ENCODE measurements at regions of chr5 and their contacts with region 1.

Region 1: GRCh38 chr5:149317281-149318048 is 27.8 kb upstream of the GRPEL2 start:
- DNase-seq: no peak
- ATAC-seq: peak; percentile 86
- H3K4me3 ChIP-seq: no peak overlapping the region
- H3K27ac ChIP-seq: no peak overlapping the region
- H3K4me1 ChIP-seq: no peaks in the 10 kb centered on the region
- H3K27me3 ChIP-seq: no peaks in the 10 kb centered on the region; a peak in 1 of 4 replicates
- CTCF ChIP-seq: peak; percentile 67 to 82 (median 72)
- EP300 ChIP-seq: no peak
- POLR2A ChIP-seq: no peak
- RAD21 ChIP-seq: peak; percentile 79

Region 2: DNA sequence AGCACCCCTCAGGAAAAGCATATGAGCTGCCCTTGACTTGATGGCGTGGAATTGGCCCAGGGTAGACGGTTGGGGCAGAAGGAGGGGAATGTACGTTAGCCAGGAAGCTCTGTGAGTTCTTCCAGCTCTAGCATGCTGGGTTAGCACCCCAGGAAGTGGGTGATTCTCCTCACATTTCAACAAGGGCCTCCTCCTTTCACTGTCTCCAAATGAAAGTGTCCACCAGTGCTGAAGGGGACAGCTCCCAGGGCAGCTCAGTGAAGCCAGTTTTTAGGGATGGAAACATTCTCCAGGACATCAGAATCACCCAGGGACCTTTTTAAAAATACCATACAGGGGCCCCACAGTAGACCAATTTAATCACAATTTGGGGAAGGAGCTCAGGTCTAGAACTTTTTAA is 63.0 kb before region 1 on chr5:
- CTCF ChIA-PET with region 1: no interaction called
- POLR2A ChIA-PET with region 1: no interaction called
- RAD21 ChIA-PET with region 1: no interaction called
- SMC1A ChIA-PET with region 1: no interaction called
- in situ Hi-C with region 1: no loop called
- intact Hi-C with region 1: no loop called
- DNase-seq: no peak
- ATAC-seq: no peak
- H3K4me3 ChIP-seq: no peak overlapping the region
- H3K27ac ChIP-seq: no peak overlapping the region
- H3K4me1 ChIP-seq: no peaks in the 10 kb centered on the region
- H3K27me3 ChIP-seq: no peaks in the 10 kb centered on the region; a peak in 1 of 4 replicates
- CTCF ChIP-seq: no peak
- EP300 ChIP-seq: no peak
- POLR2A ChIP-seq: no peak
- RAD21 ChIP-seq: no peak

Region 3: GRCh38 chr5:149357370-149358293 is 40.2 kb after region 1 on chr5 and contains the start of gene PCYOX1L:
- CTCF ChIA-PET with region 1: interaction called, 13 read pairs
- POLR2A ChIA-PET with region 1: no interaction called
- RAD21 ChIA-PET with region 1: interaction called, 5 read pairs
- SMC1A ChIA-PET with region 1: interaction called, 3 read pairs
- in situ Hi-C with region 1: no loop called
- intact Hi-C with region 1: no loop called
- DNase-seq: peak; percentile 82
- ATAC-seq: peak; percentile 100
- H3K4me3 ChIP-seq: peak within 1 kb of the TSS; percentile 84
- H3K27ac ChIP-seq: peak within 1 kb of the TSS; percentile 48
- H3K4me1 ChIP-seq: peaks cover 13% of the 10 kb centered on the region
- H3K27me3 ChIP-seq: no peaks in the 10 kb centered on the region
- CTCF ChIP-seq: no peak
- EP300 ChIP-seq: no peak
- POLR2A ChIP-seq: peak; percentile 87
- RAD21 ChIP-seq: no peak
- polyA plus RNA-seq, gene PCYOX1L: 2.9 to 5.4 TPM

Region 4: DNA sequence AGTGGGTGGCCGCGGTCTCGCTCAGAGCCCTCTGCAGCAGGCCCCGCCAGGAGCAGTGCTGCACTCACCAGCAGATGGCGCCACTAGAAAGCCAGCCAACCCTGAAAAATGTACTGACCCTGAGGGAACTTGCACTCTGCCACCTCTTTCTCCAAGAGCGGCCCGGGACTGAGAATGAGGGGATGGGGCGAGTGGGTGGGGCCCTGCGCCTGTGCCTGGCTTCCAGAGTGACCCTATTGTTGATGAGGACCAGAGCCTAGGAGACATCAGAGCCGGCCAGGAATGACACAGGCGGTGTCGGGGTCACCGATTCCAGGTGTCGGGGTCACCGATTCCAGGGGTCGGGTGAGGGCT is 64.5 kb after region 1 on chr5:
- CTCF ChIA-PET with region 1: interaction called, 18 read pairs
- POLR2A ChIA-PET with region 1: no interaction called
- RAD21 ChIA-PET with region 1: interaction called, 4 read pairs
- SMC1A ChIA-PET with region 1: no interaction called
- in situ Hi-C with region 1: no loop called
- intact Hi-C with region 1: no loop called
- DNase-seq: no peak
- ATAC-seq: peak; percentile 97
- H3K4me3 ChIP-seq: no peak overlapping the region
- H3K27ac ChIP-seq: no peak overlapping the region
- H3K4me1 ChIP-seq: no peaks in the 10 kb centered on the region
- H3K27me3 ChIP-seq: peaks cover 0 to 2% of the 10 kb centered on the region in 2 experiments; a peak in 2 of 4 replicates
- CTCF ChIP-seq: peak; percentile 83 to 90 (median 87)
- EP300 ChIP-seq: no peak
- POLR2A ChIP-seq: no peak
- RAD21 ChIP-seq: peak; percentile 69